Caco-2 (cell line): ENCODE measurements at regions of chr11 and their contacts with region 1.

Region 1: DNA sequence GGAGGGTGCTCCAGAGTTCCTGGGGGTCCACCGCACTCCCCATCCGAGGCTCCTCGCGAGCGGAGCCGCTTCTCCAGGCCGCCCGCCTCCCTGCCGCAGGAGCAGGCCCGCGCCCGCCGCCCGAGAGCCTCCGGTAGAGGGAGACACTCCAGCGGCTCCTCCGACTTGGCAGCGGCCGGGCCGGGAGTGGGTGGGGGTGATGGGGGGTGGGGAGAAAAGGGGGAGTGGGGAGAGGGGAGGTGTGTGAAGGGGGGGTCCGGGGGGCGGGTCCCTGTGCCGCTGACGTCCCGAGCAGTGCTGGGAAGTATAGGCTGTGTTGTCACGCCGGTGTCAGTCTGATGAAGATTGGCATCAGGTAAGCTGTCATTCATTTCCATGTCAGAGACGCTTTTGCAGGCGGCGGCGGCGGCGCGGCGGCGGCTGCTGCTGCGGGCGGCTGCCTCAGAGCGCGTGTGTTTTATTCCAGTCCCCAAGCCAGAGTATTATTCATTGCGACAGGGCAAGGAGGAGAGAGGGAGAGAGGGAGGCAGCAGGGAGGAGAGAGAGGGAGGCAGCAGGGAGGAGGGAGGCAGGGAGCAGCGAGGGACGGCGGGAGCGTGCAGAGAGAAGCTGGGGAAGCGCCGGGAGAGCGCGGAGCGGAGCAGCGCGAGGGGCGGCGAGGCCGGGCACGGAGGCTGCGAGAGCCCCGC is at the start of gene PKNOX2:
- DNase-seq: peak; percentile 71 to 89
- H3K4me3 ChIP-seq: peak within 1 kb of the TSS; percentile 65
- H3K4me3 Mint-ChIP-seq: peak within 1 kb of the TSS; percentile 76
- H3K27ac Mint-ChIP-seq: no peak within 1 kb of the TSS
- H3K4me1 ChIP-seq: peaks cover 5% of the 10 kb centered on the region
- H3K4me1 Mint-ChIP-seq: peaks cover 8% of the 10 kb centered on the region
- H3K27me3 ChIP-seq: peaks cover 11% of the 10 kb centered on the region
- H3K27me3 Mint-ChIP-seq: peaks cover 27% of the 10 kb centered on the region
- CTCF ChIP-seq: peak; percentile 67 to 95
- total RNA-seq, gene PKNOX2: not detected in 2 replicates

Region 2: DNA sequence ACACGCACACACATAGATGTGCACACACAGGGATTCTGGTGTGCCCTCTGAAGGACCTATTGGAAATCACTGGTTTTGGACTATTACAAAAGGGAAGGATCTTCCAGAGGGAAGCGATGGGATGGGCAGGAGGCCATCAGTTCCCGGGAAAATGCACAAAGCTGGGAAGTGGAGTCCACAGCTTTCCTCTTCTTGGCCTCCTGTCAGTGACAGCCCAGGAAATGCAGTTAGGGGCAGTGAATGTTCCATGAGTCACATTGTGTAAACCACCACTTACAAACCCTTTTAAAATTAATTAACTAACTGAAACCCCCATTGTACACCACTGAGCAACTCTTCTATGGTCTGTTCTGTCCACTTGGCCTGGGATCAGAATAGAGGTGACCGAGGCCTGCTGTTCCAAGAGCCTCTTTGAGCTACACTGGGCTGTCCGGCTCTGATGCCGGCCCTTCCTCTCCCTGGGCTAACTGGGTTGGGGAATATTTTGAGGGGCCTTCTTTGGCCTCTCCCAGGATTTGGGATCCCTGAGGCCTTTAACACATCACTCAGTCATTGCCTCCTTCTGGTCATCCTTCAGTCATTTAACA is 193.8 kb after region 1 on chr11:
- CTCF ChIA-PET with region 1: no interaction called
- POLR2A ChIA-PET with region 1: no interaction called
- intact Hi-C with region 1: no loop called
- DNase-seq: no peak
- H3K4me3 ChIP-seq: no peak overlapping the region
- H3K4me3 Mint-ChIP-seq: no peak overlapping the region
- H3K27ac Mint-ChIP-seq: no peak overlapping the region
- H3K4me1 ChIP-seq: no peaks in the 10 kb centered on the region
- H3K4me1 Mint-ChIP-seq: no peaks in the 10 kb centered on the region
- H3K27me3 ChIP-seq: peaks cover 6% of the 10 kb centered on the region
- H3K27me3 Mint-ChIP-seq: peaks cover 17% of the 10 kb centered on the region
- CTCF ChIP-seq: no peak

Region 3: GRCh38 chr11:125404776-125405435 is 240.3 kb after region 1 on chr11:
- CTCF ChIA-PET with region 1: no interaction called
- POLR2A ChIA-PET with region 1: no interaction called
- intact Hi-C with region 1: loop called (anchors 1 kb)
- DNase-seq: peak; percentile 74 to 90
- H3K4me3 ChIP-seq: no peak overlapping the region
- H3K4me3 Mint-ChIP-seq: no peak overlapping the region
- H3K27ac Mint-ChIP-seq: no peak overlapping the region
- H3K4me1 ChIP-seq: no peaks in the 10 kb centered on the region
- H3K4me1 Mint-ChIP-seq: no peaks in the 10 kb centered on the region
- H3K27me3 ChIP-seq: peaks cover 5% of the 10 kb centered on the region
- H3K27me3 Mint-ChIP-seq: peaks cover 48% of the 10 kb centered on the region
- CTCF ChIP-seq: peak; percentile 99